Panc1 (cell line): ENCODE measurements at regions of chr12 and their contacts with region 1.

Region 1: DNA sequence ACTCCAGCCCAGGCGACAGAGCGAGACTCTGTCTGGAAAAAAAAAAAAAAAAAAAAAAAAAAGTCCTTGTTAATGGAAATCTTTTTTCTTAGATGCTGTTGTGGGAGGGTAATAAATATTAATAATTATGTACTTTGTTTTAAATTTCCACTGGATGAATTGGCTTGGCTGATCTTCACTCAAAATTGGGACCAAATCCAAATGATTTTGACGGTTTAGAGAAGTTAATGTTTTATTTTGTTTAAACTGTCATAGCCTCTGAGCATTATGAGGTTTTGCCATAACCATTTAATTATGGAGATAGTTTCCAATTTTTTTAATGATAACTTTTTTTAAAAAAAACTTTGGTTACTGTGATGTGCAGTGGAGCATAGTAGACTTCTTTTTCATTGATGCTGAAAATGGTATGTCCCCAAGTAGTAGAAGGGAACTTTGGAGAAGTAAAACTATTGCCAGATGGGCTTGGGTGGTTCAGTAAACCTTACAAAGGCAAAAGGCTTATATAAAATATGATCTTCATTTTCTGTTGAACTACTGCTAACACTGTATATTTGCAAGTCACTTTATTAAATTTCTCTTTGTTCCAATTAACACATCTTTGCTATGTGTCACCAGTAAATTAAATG is 3.9 kb upstream of the PMCH start:
- DNase-seq: no peak
- ATAC-seq: no peak
- H3K4me3 ChIP-seq: no peak overlapping the region
- H3K27ac ChIP-seq: no peak overlapping the region
- H3K4me1 ChIP-seq: no peaks in the 10 kb centered on the region
- H3K27me3 ChIP-seq: no peaks in the 10 kb centered on the region
- CTCF ChIP-seq: no peak

Region 2: GRCh38 chr12:102144221-102144620 is 57.3 kb before region 1 on chr12:
- CTCF ChIA-PET with region 1: no interaction called
- POLR2A ChIA-PET with region 1: no interaction called
- in situ Hi-C with region 1: no loop called
- intact Hi-C with region 1: loop called (anchors 10 kb)
- DNase-seq: no peak
- ATAC-seq: no peak
- H3K4me3 ChIP-seq: no peak overlapping the region
- H3K27ac ChIP-seq: no peak overlapping the region
- H3K4me1 ChIP-seq: no peaks in the 10 kb centered on the region
- H3K27me3 ChIP-seq: no peaks in the 10 kb centered on the region
- CTCF ChIP-seq: no peak